Heart right ventricle (tissue), 16 donors: ENCODE measurements at regions of chr18 and their contacts with region 1.

Region 1: GRCh38 chr18:74906184-74906583 is 302.8 kb downstream of the PTGR3 start:
- DNase-seq: no peak
- ATAC-seq: no peak
- H3K4me3 ChIP-seq: no peak overlapping the region
- H3K27ac ChIP-seq: no peak overlapping the region
- H3K4me1 ChIP-seq: no peaks in the 10 kb centered on the region
- H3K27me3 ChIP-seq: no peaks in the 10 kb centered on the region
- CTCF ChIP-seq: no peak

Region 2: GRCh38 chr18:74679006-74679678 is 227.0 kb before region 1 on chr18:
- intact Hi-C with region 1: loop called in 1 of 10 experiments (anchors 10 kb)
- DNase-seq: no peak
- ATAC-seq: no peak
- H3K4me3 ChIP-seq: no peak overlapping the region
- H3K27ac ChIP-seq: no peak overlapping the region
- H3K4me1 ChIP-seq: no peaks in the 10 kb centered on the region
- H3K27me3 ChIP-seq: no peaks in the 10 kb centered on the region
- CTCF ChIP-seq: no peak

Region 3: DNA sequence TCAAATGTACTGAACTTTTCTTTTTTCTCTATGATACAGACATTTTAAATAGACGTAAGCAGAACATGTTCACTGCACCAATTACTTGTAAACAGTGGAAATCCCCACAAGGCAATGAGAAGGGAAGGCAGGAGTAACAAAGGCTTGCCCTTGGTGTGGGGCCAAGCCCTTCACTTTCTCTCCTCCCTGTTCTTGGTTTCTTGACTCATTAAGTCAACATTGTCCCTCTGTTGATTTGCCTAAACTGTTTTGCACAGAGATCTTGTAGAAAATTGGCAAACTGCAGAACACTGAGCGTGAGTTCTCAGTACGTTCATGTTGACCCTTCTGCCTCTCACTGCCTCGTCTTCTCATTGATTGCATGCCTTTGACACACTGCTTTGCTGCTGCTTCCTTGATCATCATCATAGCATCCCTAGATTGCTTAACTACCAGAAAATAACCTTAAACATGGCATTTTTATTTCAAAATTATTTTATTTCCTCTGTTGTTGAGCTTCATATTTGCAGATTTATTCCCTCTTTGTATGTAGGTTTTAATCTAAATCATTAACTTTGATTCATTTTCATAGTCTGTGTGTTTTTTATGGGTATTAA is 45.1 kb after region 1 on chr18:
- intact Hi-C with region 1: loop called in 1 of 10 experiments (anchors 10 kb)
- DNase-seq: peak in 1 of 2 donors; percentile 13
- ATAC-seq: peak in 7 of 8 donors; percentile 33 to 80 (median 72)
- H3K4me3 ChIP-seq: no peak overlapping the region
- H3K27ac ChIP-seq: peak overlapping the region in 3 of 10 donors; percentile 2 to 52 (median 11)
- H3K4me1 ChIP-seq: peaks cover 0 to 23% (median 12%) of the 10 kb centered on the region in 9 donors
- H3K27me3 ChIP-seq: no peaks in the 10 kb centered on the region
- CTCF ChIP-seq: no peak